Psoas muscle (tissue), 8 donors: ENCODE measurements at regions of chr1 and their contacts with region 1.

Region 1: DNA sequence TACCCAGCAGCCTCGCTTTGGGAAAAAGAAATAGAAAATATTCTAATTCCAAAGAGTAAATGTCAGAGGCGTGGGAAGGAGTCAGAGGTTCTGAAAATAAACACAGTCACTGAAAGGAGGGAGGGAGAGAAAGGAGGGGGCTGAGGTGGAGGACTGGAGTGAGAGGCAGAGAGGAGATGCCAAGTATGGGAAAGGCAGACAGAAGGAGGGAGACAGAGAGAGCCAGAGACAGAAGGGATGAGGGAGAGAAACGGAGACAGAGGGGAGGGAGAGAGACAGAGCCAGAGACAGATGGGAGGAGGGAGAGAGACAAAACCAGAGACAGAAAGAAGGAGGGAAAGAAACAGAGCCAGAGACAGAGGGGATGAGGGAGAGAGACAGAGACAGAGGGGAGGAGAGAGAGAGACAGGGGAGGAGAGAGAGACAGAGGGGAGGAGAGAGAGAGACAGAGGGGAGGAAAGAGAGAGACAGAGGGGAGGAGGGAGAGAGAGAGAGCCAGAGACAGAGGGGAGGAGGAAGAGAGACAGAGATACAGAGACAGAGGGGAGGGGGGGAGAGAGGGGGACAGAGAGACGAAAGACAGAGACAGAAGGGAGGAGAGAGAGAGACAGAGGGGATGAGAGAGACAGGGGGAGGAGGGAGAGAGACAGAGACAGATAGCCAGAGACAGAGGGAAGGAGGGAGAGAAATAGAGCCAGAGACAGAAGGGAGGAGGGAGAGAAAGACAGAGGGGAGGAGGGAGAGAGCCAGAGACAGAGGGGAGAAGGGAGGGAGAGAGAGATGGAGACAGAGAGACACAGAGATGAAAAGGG is 525.5 kb downstream of the MATN1 start:
- DNase-seq: no peak
- ATAC-seq: no peak
- H3K4me3 ChIP-seq: no peak overlapping the region
- H3K27ac ChIP-seq: no peak overlapping the region
- H3K4me1 ChIP-seq: no peaks in the 10 kb centered on the region
- H3K27me3 ChIP-seq: peaks cover 0 to 14% (median 3%) of the 10 kb centered on the region in 3 donors
- CTCF ChIP-seq: no peak

Region 2: GRCh38 chr1:30263888-30264671 is 66.2 kb after region 1 on chr1:
- intact Hi-C with region 1: loop called in 1 of 2 experiments (anchors 2 kb)
- DNase-seq: no peak
- ATAC-seq: no peak
- H3K4me3 ChIP-seq: no peak overlapping the region
- H3K27ac ChIP-seq: no peak overlapping the region
- H3K4me1 ChIP-seq: no peaks in the 10 kb centered on the region
- H3K27me3 ChIP-seq: peaks cover 0 to 5% (median 0%) of the 10 kb centered on the region in 3 donors
- CTCF ChIP-seq: no peak